ENCODE measurements at regions of chr5 and their contacts with region 1.

Region 1: DNA sequence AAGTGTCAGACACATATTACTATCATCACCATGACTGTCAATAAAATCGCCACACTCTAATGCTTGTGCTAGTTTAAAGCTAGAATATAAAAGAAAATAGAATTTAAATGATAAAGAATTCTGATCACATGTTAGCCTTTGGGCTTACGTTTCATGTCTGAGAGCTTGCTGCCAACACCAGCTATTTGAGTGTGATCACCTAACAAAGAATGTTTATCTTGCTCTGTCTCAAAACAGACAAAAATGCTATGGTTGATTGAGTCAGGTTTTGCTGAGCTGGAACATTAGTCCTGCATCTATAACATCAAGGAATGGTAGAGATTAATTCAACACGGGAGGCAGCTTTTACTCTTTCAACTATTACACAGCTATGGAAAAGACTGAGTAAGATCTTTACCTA is 50.7 kb downstream of the MSX2 start:
- DNase-seq: no peak
- ATAC-seq: no peak
- H3K4me3 Mint-ChIP-seq: no peak overlapping the region
- H3K27ac Mint-ChIP-seq: no peak overlapping the region
- H3K4me1 Mint-ChIP-seq: no peaks in the 10 kb centered on the region
- H3K27me3 Mint-ChIP-seq: peaks cover 26% of the 10 kb centered on the region

Region 2: GRCh38 chr5:174872271-174872670 is 97.2 kb after region 1 on chr5:
- CTCF ChIA-PET with region 1: no interaction called
- POLR2A ChIA-PET with region 1: interaction called, 10 read pairs
- intact Hi-C with region 1: no loop called
- DNase-seq: no peak
- ATAC-seq: no peak
- H3K4me3 Mint-ChIP-seq: no peak overlapping the region
- H3K27ac Mint-ChIP-seq: no peak overlapping the region
- H3K4me1 Mint-ChIP-seq: no peaks in the 10 kb centered on the region
- H3K27me3 Mint-ChIP-seq: peaks cover 20% of the 10 kb centered on the region

Measured in activated CD4-positive, alpha-beta T cell treated with anti-CD3 and anti-CD28 coated beads for 36 hours (primary cell).